Panc1 (cell line): ENCODE measurements at regions of chr11 and their contacts with region 1.

Region 1: GRCh38 chr11:35822815-35823495 is 120.9 kb upstream of the LDLRAD3 start:
- DNase-seq: no peak
- ATAC-seq: no peak
- H3K4me3 ChIP-seq: no peak overlapping the region
- H3K27ac ChIP-seq: no peak overlapping the region; the same call in 1 of the 2 replicates
- H3K4me1 ChIP-seq: peaks cover 7% of the 10 kb centered on the region
- H3K27me3 ChIP-seq: no peaks in the 10 kb centered on the region
- CTCF ChIP-seq: no peak

Region 2: GRCh38 chr11:35617687-35618496 is 205.1 kb before region 1 on chr11 and contains the start of gene FJX1:
- CTCF ChIA-PET with region 1: interaction called, 16 read pairs
- POLR2A ChIA-PET with region 1: interaction called, 3 read pairs
- in situ Hi-C with region 1: no loop called
- intact Hi-C with region 1: loop called (anchors 5 kb)
- DNase-seq: no peak
- ATAC-seq: peak; percentile 76
- H3K4me3 ChIP-seq: peak within 1 kb of the TSS; percentile 68 to 75
- H3K27ac ChIP-seq: peak within 1 kb of the TSS; percentile 85
- H3K4me1 ChIP-seq: peaks cover 44% of the 10 kb centered on the region
- H3K27me3 ChIP-seq: no peaks in the 10 kb centered on the region; the same call in 1 of the 2 replicates
- CTCF ChIP-seq: no peak
- total RNA-seq, gene FJX1: 31.1 TPM

Region 3: GRCh38 chr11:35799655-35800054 is 23.3 kb before region 1 on chr11:
- CTCF ChIA-PET with region 1: interaction called, 11 read pairs
- POLR2A ChIA-PET with region 1: no interaction called
- in situ Hi-C with region 1: no loop called
- intact Hi-C with region 1: no loop called
- DNase-seq: no peak
- ATAC-seq: no peak
- H3K4me3 ChIP-seq: no peak overlapping the region
- H3K27ac ChIP-seq: no peak overlapping the region
- H3K4me1 ChIP-seq: peaks cover 18% of the 10 kb centered on the region
- H3K27me3 ChIP-seq: no peaks in the 10 kb centered on the region
- CTCF ChIP-seq: peak; percentile 16; the same call in 1 of the 2 replicates

Region 4: GRCh38 chr11:35943713-35944655 is 121.0 kb after region 1 on chr11 and contains the start of gene LDLRAD3:
- CTCF ChIA-PET with region 1: interaction called, 5 read pairs
- POLR2A ChIA-PET with region 1: no interaction called
- in situ Hi-C with region 1: no loop called
- intact Hi-C with region 1: loop called (anchors 10 kb)
- DNase-seq: no peak
- ATAC-seq: peak; percentile 96
- H3K4me3 ChIP-seq: peak within 1 kb of the TSS; percentile 60 to 92
- H3K27ac ChIP-seq: peak within 1 kb of the TSS; percentile 93
- H3K4me1 ChIP-seq: peaks cover 29% of the 10 kb centered on the region
- H3K27me3 ChIP-seq: no peaks in the 10 kb centered on the region
- CTCF ChIP-seq: no peak
- total RNA-seq, gene LDLRAD3: 28.1 TPM

Region 5: DNA sequence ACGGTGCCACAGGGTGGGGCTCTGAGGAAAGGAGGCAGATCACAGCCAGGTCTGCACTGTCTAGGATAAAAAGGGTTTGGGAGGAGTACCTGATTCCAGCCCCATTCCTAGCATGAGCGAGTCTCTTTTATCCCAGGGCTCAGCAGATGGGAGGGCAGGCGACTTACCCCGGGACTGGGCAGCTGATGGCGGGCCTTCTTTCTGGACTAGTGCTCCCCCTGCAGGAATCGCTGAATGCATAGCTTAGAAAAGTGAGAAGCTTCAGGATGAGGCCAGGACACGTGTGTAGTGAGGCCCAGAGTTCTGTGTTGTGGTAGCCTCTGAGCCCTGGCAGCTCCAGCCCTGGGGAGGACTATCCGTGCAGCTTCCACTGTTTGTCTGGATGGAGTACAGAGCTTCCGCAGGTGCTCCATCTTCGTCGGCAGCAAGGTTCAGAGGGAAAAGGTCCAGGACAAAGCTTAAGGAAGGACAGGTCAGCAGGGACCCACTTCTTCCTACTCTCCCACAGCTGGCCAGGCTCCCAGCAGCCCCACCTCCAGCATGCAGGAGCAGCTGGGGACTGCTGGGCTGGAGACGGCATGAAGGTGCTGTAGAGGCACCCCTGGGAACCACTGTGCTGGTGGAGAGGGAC is 435.9 kb after region 1 on chr11:
- CTCF ChIA-PET with region 1: interaction called, 32 read pairs
- POLR2A ChIA-PET with region 1: no interaction called
- in situ Hi-C with region 1: no loop called
- intact Hi-C with region 1: no loop called
- DNase-seq: peak; percentile 27
- ATAC-seq: peak; percentile 94
- H3K4me3 ChIP-seq: no peak overlapping the region
- H3K27ac ChIP-seq: 0 out of 2 replicates have a peak overlapping the region, but pooled peaks have one; percentile 29
- H3K4me1 ChIP-seq: no peaks in the 10 kb centered on the region
- H3K27me3 ChIP-seq: no peaks in the 10 kb centered on the region
- CTCF ChIP-seq: peak; percentile 87